B cell (primary cell): ENCODE measurements at regions of chr12 and their contacts with region 1.

Region 1: DNA sequence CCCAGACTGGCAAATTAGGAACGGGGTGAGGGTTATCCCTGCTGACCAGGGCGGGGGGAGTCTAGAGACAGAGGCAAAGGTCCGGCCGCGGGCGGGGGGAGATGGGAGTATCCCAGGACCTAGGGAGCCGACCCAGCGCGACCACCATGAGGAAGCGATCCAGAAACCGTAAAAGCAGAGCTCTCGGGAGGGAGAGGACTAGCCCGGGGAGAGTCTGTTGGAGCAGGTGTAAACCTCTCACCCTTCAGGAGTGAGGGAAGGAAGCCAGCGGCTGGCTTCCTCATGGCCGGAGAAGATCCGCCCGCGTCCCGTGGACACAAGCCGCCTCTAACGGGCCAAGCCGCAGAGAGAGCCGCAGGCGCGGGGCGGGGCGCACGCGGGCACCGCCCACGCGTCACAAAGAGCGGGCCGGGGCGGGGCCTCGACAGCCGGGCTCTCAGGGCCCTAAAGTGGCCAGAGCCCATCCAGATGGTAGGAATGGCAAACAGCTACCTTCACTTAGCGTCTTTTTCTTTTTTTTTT is at the start of gene ACRBP:
- DNase-seq: peak; percentile 73
- ATAC-seq: peak; percentile 83
- H3K4me3 ChIP-seq: peak within 1 kb of the TSS; percentile 31 to 77 (median 60)
- H3K4me3 Mint-ChIP-seq: peak within 1 kb of the TSS; percentile 83
- H3K27ac ChIP-seq: peak within 1 kb of the TSS in 1 of 2 donors; percentile 60
- H3K27ac Mint-ChIP-seq: peak within 1 kb of the TSS; percentile 68
- H3K4me1 ChIP-seq: peaks cover 24 to 43% of the 10 kb centered on the region in 2 donors
- H3K4me1 Mint-ChIP-seq: peaks cover 40% of the 10 kb centered on the region
- H3K27me3 ChIP-seq: no peaks in the 10 kb centered on the region
- H3K27me3 Mint-ChIP-seq: no peaks in the 10 kb centered on the region
- CTCF ChIP-seq: no peak
- total RNA-seq, gene ACRBP: 11.9 and 12.3 TPM in 2 replicates

Region 2: DNA sequence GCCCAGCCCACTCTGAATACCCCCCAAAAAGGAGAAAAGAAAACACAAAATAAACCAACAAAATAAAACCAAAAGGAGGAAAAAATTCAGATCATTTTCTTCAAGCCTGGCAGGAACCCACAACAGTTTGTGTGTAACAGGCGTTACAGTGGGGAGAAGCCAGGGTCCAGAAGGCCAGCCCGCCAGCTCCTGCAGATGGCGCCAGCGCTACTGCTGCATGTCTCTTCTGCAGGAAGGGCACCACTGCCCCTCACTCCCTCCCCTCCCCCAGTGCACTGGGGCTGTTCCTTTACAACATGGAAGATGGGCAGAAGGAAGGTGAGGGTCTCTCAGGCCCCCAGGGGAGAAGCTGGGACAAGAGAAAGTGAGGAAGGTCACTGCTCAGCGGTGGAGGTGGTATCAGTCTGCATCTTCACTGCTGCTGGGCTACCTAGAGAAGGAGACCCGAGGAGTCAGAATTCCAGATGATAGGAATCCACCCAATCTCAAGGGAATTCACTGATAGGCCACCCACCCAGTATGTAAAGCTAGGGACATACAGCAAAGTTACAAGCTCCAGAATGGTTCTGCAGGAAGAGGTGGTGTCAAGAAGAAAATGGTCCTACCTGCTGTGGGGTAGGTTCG is 76.8 kb before region 1 on chr12:
- CTCF ChIA-PET with region 1: no interaction called
- POLR2A ChIA-PET with region 1: no interaction called
- intact Hi-C with region 1: no loop called
- DNase-seq: peak; percentile 66
- ATAC-seq: no peak
- H3K4me3 ChIP-seq: no peak overlapping the region
- H3K4me3 Mint-ChIP-seq: no peak overlapping the region
- H3K27ac ChIP-seq: no peak overlapping the region
- H3K27ac Mint-ChIP-seq: peak overlapping the region; percentile 46
- H3K4me1 ChIP-seq: peaks cover 7 to 22% of the 10 kb centered on the region in 2 donors
- H3K4me1 Mint-ChIP-seq: peaks cover 34% of the 10 kb centered on the region
- H3K27me3 ChIP-seq: no peaks in the 10 kb centered on the region
- H3K27me3 Mint-ChIP-seq: no peaks in the 10 kb centered on the region
- CTCF ChIP-seq: peak; percentile 65

Region 3: DNA sequence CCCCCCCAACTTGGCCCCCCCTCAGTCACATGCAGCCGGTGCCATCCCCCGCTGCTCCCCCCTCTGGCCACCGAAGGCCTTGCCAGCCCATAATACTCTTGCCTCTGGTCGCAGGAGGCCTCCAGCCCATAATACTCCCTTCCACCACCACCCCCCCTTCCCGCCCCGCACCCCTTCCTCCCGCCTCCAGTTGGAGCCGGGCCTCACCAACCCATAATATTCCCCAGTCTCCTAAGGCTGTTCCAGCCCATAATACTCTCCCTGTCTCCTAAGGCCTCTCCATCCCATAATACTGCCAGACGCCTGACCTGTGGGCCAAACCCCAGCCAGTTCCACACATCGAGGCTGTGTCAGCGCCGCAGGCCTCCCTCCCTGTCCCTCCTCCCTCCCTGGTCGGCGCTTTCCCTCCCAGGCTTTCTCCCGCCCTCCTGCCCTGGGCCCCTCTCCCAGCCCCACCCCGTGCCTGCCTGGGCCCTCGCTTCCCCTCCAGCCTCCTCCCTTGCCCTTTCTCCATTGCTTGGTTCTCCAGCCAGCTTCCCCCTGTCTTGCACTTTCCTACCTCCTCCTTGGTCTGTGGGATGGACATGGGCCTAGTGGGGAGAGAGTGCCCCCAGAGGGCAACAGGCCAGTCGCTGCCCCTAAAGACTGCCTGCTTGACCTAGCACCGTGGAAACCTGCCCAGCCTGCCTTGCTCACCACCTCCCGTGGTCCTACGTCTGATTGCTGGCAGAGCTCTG is 33.2 kb before region 1 on chr12:
- CTCF ChIA-PET with region 1: interaction called, 24 read pairs
- POLR2A ChIA-PET with region 1: interaction called, 3 read pairs
- intact Hi-C with region 1: no loop called
- DNase-seq: peak; percentile 81
- ATAC-seq: peak; percentile 48
- H3K4me3 ChIP-seq: no peak overlapping the region
- H3K4me3 Mint-ChIP-seq: peak overlapping the region; percentile 24
- H3K27ac ChIP-seq: peak overlapping the region; percentile 63 to 88
- H3K27ac Mint-ChIP-seq: peak overlapping the region; percentile 87
- H3K4me1 ChIP-seq: peaks cover 32 to 51% of the 10 kb centered on the region in 2 donors
- H3K4me1 Mint-ChIP-seq: peaks cover 65% of the 10 kb centered on the region
- H3K27me3 ChIP-seq: no peaks in the 10 kb centered on the region
- H3K27me3 Mint-ChIP-seq: no peaks in the 10 kb centered on the region
- CTCF ChIP-seq: no peak

Region 4: GRCh38 chr12:6730169-6730568 is 83.0 kb after region 1 on chr12:
- CTCF ChIA-PET with region 1: no interaction called
- POLR2A ChIA-PET with region 1: no interaction called
- intact Hi-C with region 1: no loop called
- DNase-seq: no peak
- ATAC-seq: no peak
- H3K4me3 ChIP-seq: no peak overlapping the region
- H3K4me3 Mint-ChIP-seq: no peak overlapping the region
- H3K27ac ChIP-seq: no peak overlapping the region
- H3K27ac Mint-ChIP-seq: no peak overlapping the region
- H3K4me1 ChIP-seq: no peaks in the 10 kb centered on the region
- H3K4me1 Mint-ChIP-seq: peaks cover 5% of the 10 kb centered on the region
- H3K27me3 ChIP-seq: no peaks in the 10 kb centered on the region
- H3K27me3 Mint-ChIP-seq: no peaks in the 10 kb centered on the region
- CTCF ChIP-seq: no peak